ENCODE measurements at regions of chr9 and their contacts with region 1.

Region 1: GRCh38 chr9:21031091-21031807 is at the start of gene HACD4:
- DNase-seq: peak; percentile 59
- ATAC-seq: peak; percentile 78
- H3K4me3 Mint-ChIP-seq: peak within 1 kb of the TSS; percentile 81
- H3K27ac Mint-ChIP-seq: peak within 1 kb of the TSS; percentile 70
- H3K4me1 Mint-ChIP-seq: peaks cover 17% of the 10 kb centered on the region
- H3K27me3 Mint-ChIP-seq: no peaks in the 10 kb centered on the region
- CTCF ChIP-seq: no peak
- total RNA-seq, gene HACD4: 3.3 and 4.1 TPM in 2 replicates

Region 2: DNA sequence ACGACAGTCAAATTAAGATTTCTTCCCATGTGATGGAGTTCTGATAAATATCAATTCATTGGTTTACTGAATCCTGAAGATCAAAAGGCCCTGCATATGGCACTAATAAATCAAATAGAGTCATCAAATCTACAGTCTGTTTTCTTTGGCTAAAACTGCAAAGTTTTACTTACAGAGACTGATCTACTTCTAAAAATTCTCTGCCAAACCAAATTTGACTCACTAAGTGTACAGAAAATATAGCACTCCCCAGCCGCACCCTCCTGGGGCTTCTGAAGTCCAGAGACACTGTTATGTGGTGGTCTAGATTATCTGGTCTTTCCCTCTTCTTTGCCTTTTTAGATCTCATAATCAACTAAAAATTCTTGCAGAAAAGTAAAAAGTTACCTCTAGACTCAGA is 646.6 kb before region 1 on chr9:
- CTCF ChIA-PET with region 1: no interaction called
- POLR2A ChIA-PET with region 1: no interaction called
- intact Hi-C with region 1: no loop called
- DNase-seq: no peak
- ATAC-seq: no peak
- H3K4me3 Mint-ChIP-seq: no peak overlapping the region
- H3K27ac Mint-ChIP-seq: no peak overlapping the region
- H3K4me1 Mint-ChIP-seq: no peaks in the 10 kb centered on the region
- H3K27me3 Mint-ChIP-seq: peaks cover under 1% of the 10 kb centered on the region
- CTCF ChIP-seq: no peak

Region 3: DNA sequence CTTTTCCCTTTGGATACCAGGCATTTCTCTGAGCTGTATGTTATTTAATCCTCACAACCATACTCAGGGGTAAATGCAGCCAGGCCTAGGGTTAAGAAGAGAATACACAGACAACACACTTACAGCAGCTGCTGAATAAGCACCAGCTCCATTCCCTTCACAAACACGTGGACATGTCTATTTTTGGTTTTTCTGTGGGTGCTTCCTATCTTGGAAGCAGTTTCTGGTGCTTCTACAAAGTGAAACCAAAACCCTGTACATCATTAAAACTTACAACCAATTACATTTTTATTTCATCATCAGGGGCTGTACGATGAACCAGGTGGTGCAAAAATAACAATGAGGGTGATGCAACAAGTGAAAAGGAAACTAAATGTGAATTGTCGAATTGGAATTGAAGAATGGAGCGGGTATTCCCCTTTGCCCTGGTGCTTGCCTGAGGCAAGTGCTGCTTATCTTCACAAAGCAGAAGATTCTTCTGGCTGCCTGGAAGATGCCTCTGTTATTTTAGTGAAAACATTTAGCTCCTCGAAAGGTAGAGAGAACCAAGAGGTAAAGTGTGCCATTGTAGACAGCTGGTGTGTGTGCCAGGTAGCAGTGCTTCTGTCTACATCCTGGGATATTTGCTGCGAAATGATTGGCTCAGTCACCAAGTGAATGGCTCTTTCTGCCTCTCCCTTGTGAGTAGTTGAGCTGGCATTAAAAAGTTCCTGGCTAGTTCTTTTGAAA is 65.1 kb after region 1 on chr9:
- CTCF ChIA-PET with region 1: no interaction called
- POLR2A ChIA-PET with region 1: no interaction called
- intact Hi-C with region 1: loop called (anchors 2 kb)
- DNase-seq: no peak
- ATAC-seq: peak; percentile 78
- H3K4me3 Mint-ChIP-seq: peak overlapping the region; percentile 61
- H3K27ac Mint-ChIP-seq: peak overlapping the region; percentile 42
- H3K4me1 Mint-ChIP-seq: peaks cover 33% of the 10 kb centered on the region
- H3K27me3 Mint-ChIP-seq: no peaks in the 10 kb centered on the region
- CTCF ChIP-seq: no peak

Region 4: GRCh38 chr9:21802195-21803000 is 771.1 kb after region 1 on chr9 and contains the start of gene MTAP:
- CTCF ChIA-PET with region 1: no interaction called
- POLR2A ChIA-PET with region 1: no interaction called
- intact Hi-C with region 1: loop called (anchors 10 kb)
- DNase-seq: peak; percentile 68
- ATAC-seq: peak; percentile 88
- H3K4me3 Mint-ChIP-seq: peak within 1 kb of the TSS; percentile 99
- H3K27ac Mint-ChIP-seq: peak within 1 kb of the TSS; percentile 91
- H3K4me1 Mint-ChIP-seq: peaks cover 53% of the 10 kb centered on the region
- H3K27me3 Mint-ChIP-seq: peaks cover 15% of the 10 kb centered on the region
- CTCF ChIP-seq: no peak
- total RNA-seq, gene MTAP: 30.4 and 43.2 TPM in 2 replicates